Motor neuron (in vitro differentiated cells): ENCODE measurements at regions of chr5 and their contacts with region 1.

Region 1: DNA sequence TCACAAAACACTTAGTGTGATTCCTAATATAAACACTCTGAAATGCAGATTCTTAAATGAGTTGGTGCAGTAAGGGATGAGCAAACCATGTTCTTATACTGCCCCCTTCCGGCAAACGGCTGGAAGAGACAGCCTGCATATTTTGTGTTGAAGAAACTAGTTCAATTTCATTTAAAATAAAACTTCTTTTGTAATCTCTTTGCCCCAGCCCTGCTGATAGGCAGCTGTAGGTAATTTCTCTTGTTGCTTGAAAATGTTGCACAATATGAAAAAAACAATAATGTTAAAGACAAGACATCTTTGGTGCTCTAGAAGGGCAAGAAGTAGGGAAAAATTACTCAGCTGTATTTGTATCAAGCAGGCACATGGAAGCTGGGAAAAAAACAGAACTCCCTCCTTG is 89.7 kb upstream of the CCNG1 start:
- ATAC-seq: peak; percentile 48 to 77 (median 60)
- H3K4me3 ChIP-seq: no peak overlapping the region
- H3K27ac ChIP-seq: no peak overlapping the region
- H3K4me1 ChIP-seq: peaks cover 0 to 3% of the 10 kb centered on the region in 2 donors

Region 2: DNA sequence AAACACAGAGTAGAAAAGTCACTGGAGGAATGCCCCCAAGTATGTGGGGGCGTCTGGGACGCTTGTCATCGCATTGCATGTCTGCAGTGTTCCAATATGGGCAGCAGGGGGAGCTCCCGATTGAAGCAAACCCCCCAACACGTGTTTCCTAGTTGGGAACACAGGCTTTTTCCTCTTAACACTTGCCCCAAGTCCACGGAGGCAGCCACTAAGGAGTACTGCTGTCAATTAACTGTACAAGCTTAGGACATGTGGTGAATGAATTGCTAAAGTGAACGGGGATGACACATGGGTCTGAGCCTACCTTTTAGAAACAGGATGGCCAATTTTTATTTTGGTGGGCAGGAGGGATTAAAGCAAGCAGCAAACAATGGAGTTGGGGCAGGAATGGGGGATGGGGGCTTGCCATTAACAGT is 1803.3 kb before region 1 on chr5:
- in situ Hi-C with region 1: loop called in 1 of 9 experiments (anchors 25 kb)
- ATAC-seq: peak in 3 of 8 experiments; percentile 33 to 49 (median 38)
- H3K4me3 ChIP-seq: peak overlapping the region in 1 of 5 donors; percentile 82
- H3K27ac ChIP-seq: no peak overlapping the region
- H3K4me1 ChIP-seq: peaks cover 2 to 5% of the 10 kb centered on the region in 2 donors

Region 3: GRCh38 chr5:161851691-161852299 is 1495.9 kb before region 1 on chr5:
- in situ Hi-C with region 1: loop called in 1 of 9 experiments (anchors 25 kb)
- ATAC-seq: no peak
- H3K4me3 ChIP-seq: no peak overlapping the region
- H3K27ac ChIP-seq: no peak overlapping the region
- H3K4me1 ChIP-seq: peaks cover 3 to 12% of the 10 kb centered on the region in 2 donors

Region 4: GRCh38 chr5:163261647-163262269 is 85.9 kb before region 1 on chr5:
- in situ Hi-C with region 1: no loop called
- ATAC-seq: peak in 1 of 8 experiments; percentile 23
- H3K4me3 ChIP-seq: no peak overlapping the region
- H3K27ac ChIP-seq: no peak overlapping the region
- H3K4me1 ChIP-seq: no peaks in the 10 kb centered on the region